IMR-90 (cell line): ENCODE measurements at regions of chr1 and their contacts with region 1.

Region 1: DNA sequence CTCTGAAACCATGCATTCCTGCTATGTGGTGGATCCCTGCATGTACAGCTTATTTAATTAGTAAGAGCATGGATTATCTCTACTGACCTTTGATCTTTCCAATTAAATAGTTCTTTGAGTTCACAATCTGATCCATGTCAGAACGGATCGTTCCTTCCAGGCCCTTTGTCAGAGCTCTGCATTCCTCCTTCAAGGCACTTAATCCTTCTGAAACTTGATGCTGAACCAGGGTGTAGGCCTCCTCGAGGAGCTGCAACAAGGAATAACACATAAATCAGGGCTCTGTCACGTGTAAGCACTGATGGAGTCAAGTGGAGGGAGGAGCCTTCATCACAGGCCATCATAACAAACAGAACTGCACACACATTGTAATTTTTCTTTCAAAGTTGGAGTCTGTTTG is 68.4 kb upstream of the EDEM3 start:
- DNase-seq: peak; percentile 10
- ATAC-seq: peak; percentile 75
- H3K4me3 ChIP-seq: no peak overlapping the region
- H3K27ac ChIP-seq: no peak overlapping the region
- H3K4me1 ChIP-seq: peaks cover 10% of the 10 kb centered on the region
- H3K27me3 ChIP-seq: no peaks in the 10 kb centered on the region
- CTCF ChIP-seq: no peak
- POLR2A ChIP-seq: no peak
- RAD21 ChIP-seq: no peak

Region 2: DNA sequence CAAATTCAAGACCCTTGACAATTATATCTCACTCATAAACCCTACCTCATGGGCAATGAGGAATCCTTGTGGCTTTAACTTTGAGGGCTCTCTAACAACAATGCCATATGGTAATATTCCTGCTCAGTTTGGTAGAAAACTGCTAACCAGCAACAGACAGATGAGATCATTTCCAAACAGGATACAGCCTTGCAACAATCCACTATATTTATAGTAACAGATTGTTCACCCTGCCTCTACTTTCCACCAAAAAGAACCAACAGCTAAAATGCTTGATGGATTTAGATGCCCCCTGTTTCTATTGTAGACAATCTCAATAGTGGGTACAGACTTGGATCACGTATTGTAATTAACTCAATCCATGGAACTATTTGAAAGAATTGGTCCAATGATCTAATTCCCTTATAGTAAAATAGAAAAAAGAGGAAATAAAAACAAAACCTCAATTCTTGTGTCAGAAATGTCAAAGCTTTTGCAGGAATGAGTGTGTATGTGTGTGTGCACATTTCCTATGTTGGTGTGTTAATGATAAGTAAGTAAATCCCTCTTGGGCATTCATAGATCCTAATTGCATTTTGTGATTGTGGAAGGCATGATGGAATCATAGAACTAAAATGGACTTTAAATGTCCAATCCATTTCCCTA is 31.5 kb after region 1 on chr1:
- CTCF ChIA-PET with region 1: no interaction called
- POLR2A ChIA-PET with region 1: no interaction called
- dilution Hi-C with region 1: no loop called
- in situ Hi-C with region 1: no loop called
- intact Hi-C with region 1: loop called (anchors 5 kb)
- DNase-seq: peak; percentile 76
- ATAC-seq: peak; percentile 79
- H3K4me3 ChIP-seq: no peak overlapping the region
- H3K27ac ChIP-seq: no peak overlapping the region
- H3K4me1 ChIP-seq: peaks cover 1% of the 10 kb centered on the region; the same call in 1 of the 2 replicates
- H3K27me3 ChIP-seq: no peaks in the 10 kb centered on the region
- CTCF ChIP-seq: no peak
- POLR2A ChIP-seq: no peak
- RAD21 ChIP-seq: no peak

Region 3: GRCh38 chr1:184910691-184911091 is 87.6 kb after region 1 on chr1:
- CTCF ChIA-PET with region 1: no interaction called
- POLR2A ChIA-PET with region 1: no interaction called
- dilution Hi-C with region 1: no loop called
- in situ Hi-C with region 1: no loop called
- intact Hi-C with region 1: no loop called
- DNase-seq: peak; percentile 28
- ATAC-seq: peak; percentile 54
- H3K4me3 ChIP-seq: no peak overlapping the region
- H3K27ac ChIP-seq: peak overlapping the region; percentile 10; the same call in 1 of the 2 replicates
- H3K4me1 ChIP-seq: peaks cover 6% of the 10 kb centered on the region
- H3K27me3 ChIP-seq: no peaks in the 10 kb centered on the region
- CTCF ChIP-seq: no peak
- POLR2A ChIP-seq: no peak
- RAD21 ChIP-seq: no peak